Posterior vena cava (tissue), 2 donors: ENCODE measurements at regions of chr5 and their contacts with region 1.

Region 1: GRCh38 chr5:123382252-123382651 is 41.0 kb downstream of the CEP120 start:
- DNase-seq: no peak

Region 2: DNA sequence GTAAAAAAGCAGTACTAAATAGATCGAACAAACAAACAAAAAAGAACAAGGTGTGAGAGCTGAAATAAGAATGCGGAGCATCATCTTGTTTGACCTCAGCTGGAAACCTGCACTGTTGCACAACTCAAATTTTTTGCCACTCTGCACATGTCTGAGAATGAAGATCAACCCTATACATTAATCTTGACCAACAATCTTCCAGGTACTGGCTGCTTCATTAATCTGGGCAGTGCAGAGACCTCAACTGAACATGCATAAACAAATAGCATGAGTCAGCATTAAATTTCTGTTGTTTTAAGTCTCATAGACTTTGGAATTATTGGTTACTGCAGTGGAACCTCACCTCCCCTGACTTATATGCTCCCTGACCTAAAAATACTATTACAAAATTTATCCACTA is 1645.1 kb before region 1 on chr5:
- intact Hi-C with region 1: no loop called
- DNase-seq: no peak

Region 3: GRCh38 chr5:123708074-123708806 is 326.0 kb after region 1 on chr5:
- intact Hi-C with region 1: no loop called
- DNase-seq: no peak

Region 4: GRCh38 chr5:124952079-124952478 is 1569.8 kb after region 1 on chr5:
- intact Hi-C with region 1: loop called in 1 of 2 experiments (anchors 5 kb)
- DNase-seq: no peak